ENCODE measurements at regions of chr13 and their contacts with region 1.

Region 1: GRCh38 chr13:99269627-99270241 is 11.6 kb upstream of the GPR18 start:
- DNase-seq: no peak
- H3K4me3 Mint-ChIP-seq: no peak overlapping the region
- H3K27ac Mint-ChIP-seq: peak overlapping the region; percentile 62
- H3K4me1 Mint-ChIP-seq: peaks cover 62% of the 10 kb centered on the region
- H3K27me3 Mint-ChIP-seq: no peaks in the 10 kb centered on the region

Region 2: GRCh38 chr13:99182439-99182838 is 87.3 kb before region 1 on chr13:
- CTCF ChIA-PET with region 1: interaction called, 221 read pairs
- POLR2A ChIA-PET with region 1: interaction called, 7 read pairs
- intact Hi-C with region 1: no loop called
- DNase-seq: no peak
- H3K4me3 Mint-ChIP-seq: no peak overlapping the region
- H3K27ac Mint-ChIP-seq: no peak overlapping the region
- H3K4me1 Mint-ChIP-seq: peaks cover 17% of the 10 kb centered on the region
- H3K27me3 Mint-ChIP-seq: no peaks in the 10 kb centered on the region

Region 3: GRCh38 chr13:99258210-99258860 is 11.4 kb before region 1 on chr13 and contains the start of gene GPR18:
- CTCF ChIA-PET with region 1: interaction called, 33 read pairs
- POLR2A ChIA-PET with region 1: interaction called, 3 read pairs
- intact Hi-C with region 1: no loop called
- DNase-seq: peak; percentile 57
- H3K4me3 Mint-ChIP-seq: peak within 1 kb of the TSS; percentile 77
- H3K27ac Mint-ChIP-seq: peak within 1 kb of the TSS; percentile 90
- H3K4me1 Mint-ChIP-seq: peaks cover 76% of the 10 kb centered on the region
- H3K27me3 Mint-ChIP-seq: no peaks in the 10 kb centered on the region
- total RNA-seq, gene GPR18: 2.4 to 2.8 TPM

Region 4: GRCh38 chr13:99296398-99296797 is 26.7 kb after region 1 on chr13:
- CTCF ChIA-PET with region 1: interaction called, 93 read pairs
- POLR2A ChIA-PET with region 1: interaction called, 10 read pairs
- intact Hi-C with region 1: no loop called
- DNase-seq: no peak
- H3K4me3 Mint-ChIP-seq: peak overlapping the region; percentile 47
- H3K27ac Mint-ChIP-seq: peak overlapping the region; percentile 88
- H3K4me1 Mint-ChIP-seq: peaks cover 80% of the 10 kb centered on the region
- H3K27me3 Mint-ChIP-seq: no peaks in the 10 kb centered on the region

Region 5: GRCh38 chr13:99322297-99323103 is 52.8 kb after region 1 on chr13:
- CTCF ChIA-PET with region 1: interaction called, 19 read pairs
- POLR2A ChIA-PET with region 1: interaction called, 4 read pairs
- intact Hi-C with region 1: no loop called
- DNase-seq: peak; percentile 53
- H3K4me3 Mint-ChIP-seq: peak overlapping the region; percentile 27
- H3K27ac Mint-ChIP-seq: peak overlapping the region; percentile 93
- H3K4me1 Mint-ChIP-seq: peaks cover 84% of the 10 kb centered on the region
- H3K27me3 Mint-ChIP-seq: no peaks in the 10 kb centered on the region

Region 6: DNA sequence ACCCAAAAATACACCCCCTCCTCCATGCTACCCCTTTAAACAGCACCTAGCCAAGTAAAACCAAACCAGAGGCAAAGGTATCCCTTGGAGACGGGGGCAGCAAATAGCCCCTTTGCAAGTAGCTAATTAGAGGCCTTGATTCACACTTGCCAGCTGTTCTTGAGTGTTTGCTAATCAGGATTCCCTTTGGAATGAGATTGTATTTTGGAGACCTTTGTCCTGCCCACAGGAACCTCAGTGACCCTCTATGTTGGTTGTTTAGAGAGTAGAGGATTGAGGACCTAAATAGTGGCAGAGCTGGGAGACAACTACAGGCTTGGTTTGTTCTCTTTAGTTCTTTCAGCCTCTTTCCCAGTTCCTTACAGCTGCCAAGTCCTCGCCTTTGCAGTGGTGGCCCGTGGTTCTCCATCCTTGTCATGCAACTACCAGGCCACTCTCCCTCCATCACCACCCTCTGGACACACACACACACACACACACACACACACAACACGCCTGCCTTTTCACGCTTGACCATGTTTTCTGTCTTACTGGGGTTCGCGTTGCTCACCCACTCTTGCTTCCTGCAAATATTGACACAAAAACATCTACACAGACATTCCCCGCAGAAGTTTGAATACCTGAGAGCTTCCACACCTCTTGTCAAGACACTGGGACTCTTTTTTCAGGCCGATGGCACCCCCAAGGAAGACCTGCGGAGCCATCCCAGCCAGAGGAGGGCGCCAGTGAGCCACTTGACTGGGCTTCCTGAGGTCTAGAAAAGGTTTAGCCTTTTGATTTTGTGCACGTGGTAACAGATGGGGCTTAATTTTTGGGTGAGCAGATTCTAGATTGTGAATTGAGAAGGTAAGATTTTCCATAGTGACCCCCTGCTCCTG is 117.4 kb after region 1 on chr13:
- CTCF ChIA-PET with region 1: interaction called, 71 read pairs
- POLR2A ChIA-PET with region 1: interaction called, 10 read pairs
- intact Hi-C with region 1: loop called (anchors 1 kb)
- DNase-seq: peak; percentile 92
- H3K4me3 Mint-ChIP-seq: no peak overlapping the region
- H3K27ac Mint-ChIP-seq: peak overlapping the region; percentile 61
- H3K4me1 Mint-ChIP-seq: peaks cover 64% of the 10 kb centered on the region
- H3K27me3 Mint-ChIP-seq: no peaks in the 10 kb centered on the region

Region 7: GRCh38 chr13:99501184-99501847 is 231.6 kb after region 1 on chr13 and contains the start of gene TM9SF2:
- CTCF ChIA-PET with region 1: interaction called, 5 read pairs
- POLR2A ChIA-PET with region 1: no interaction called
- intact Hi-C with region 1: loop called (anchors 5 kb)
- DNase-seq: peak; percentile 98
- H3K4me3 Mint-ChIP-seq: peak within 1 kb of the TSS; percentile 88
- H3K27ac Mint-ChIP-seq: peak within 1 kb of the TSS; percentile 88
- H3K4me1 Mint-ChIP-seq: peaks cover 67% of the 10 kb centered on the region
- H3K27me3 Mint-ChIP-seq: no peaks in the 10 kb centered on the region
- total RNA-seq, gene TM9SF2: 67.2 to 72.0 TPM